ENCODE measurements at regions of chr16 and their contacts with region 1.

Region 1: DNA sequence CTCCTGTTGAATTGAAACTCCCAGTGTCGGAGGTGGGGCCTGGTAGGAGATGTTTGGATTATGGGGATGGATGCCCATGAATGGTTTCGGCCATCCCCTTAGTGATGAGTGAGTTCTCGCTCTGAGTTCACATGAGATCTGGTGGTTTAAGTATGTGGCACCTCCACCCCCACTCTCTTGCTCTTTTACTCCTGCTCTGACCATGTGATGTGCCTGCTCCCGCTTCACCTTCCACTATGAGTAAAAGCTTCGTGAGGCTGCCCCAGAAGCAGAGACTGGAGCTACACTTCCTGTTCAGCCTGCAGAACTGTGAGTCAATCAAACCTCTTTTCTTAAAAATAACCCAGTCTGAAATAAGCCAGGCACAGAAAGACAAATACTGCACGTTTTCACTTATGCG is 512.4 kb downstream of the HS3ST4 start:
- DNase-seq: no peak
- ATAC-seq: no peak

Region 2: GRCh38 chr16:26133416-26134093 is 70.6 kb before region 1 on chr16:
- intact Hi-C with region 1: no loop called
- DNase-seq: no peak
- ATAC-seq: no peak

Region 3: GRCh38 chr16:26149364-26150190 is 54.6 kb before region 1 on chr16:
- intact Hi-C with region 1: loop called (anchors 10 kb)
- DNase-seq: no peak
- ATAC-seq: no peak